Body of pancreas (tissue), 4 donors: ENCODE measurements at regions of chr12 and their contacts with region 1.

Region 1: DNA sequence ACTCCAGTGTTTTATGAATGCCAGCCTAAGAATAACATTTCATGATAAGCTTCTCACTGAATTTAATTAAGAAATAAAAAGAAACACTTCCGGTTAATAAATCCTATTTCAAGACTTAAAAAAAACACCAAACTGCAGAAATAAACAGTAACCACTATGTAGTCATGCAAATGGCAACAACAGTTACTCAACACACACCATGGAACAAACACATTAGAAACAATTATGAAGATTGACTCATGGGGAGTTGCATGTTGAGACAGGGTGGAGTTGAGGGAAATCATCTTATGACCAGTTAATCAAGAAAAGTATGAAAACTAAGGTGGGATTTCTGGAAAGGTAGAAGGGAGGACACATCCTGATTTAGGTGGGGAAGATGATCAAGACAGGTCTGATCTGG is 52.7 kb downstream of the PLBD1 start:
- DNase-seq: no peak
- ATAC-seq: no peak
- H3K4me3 ChIP-seq: no peak overlapping the region
- H3K27ac ChIP-seq: peak overlapping the region in 2 of 4 donors; percentile 2 to 53
- H3K4me1 ChIP-seq: peaks cover 14% of the 10 kb centered on the region
- H3K27me3 ChIP-seq: no peaks in the 10 kb centered on the region
- CTCF ChIP-seq: no peak
- POLR2A ChIP-seq: no peak

Region 2: DNA sequence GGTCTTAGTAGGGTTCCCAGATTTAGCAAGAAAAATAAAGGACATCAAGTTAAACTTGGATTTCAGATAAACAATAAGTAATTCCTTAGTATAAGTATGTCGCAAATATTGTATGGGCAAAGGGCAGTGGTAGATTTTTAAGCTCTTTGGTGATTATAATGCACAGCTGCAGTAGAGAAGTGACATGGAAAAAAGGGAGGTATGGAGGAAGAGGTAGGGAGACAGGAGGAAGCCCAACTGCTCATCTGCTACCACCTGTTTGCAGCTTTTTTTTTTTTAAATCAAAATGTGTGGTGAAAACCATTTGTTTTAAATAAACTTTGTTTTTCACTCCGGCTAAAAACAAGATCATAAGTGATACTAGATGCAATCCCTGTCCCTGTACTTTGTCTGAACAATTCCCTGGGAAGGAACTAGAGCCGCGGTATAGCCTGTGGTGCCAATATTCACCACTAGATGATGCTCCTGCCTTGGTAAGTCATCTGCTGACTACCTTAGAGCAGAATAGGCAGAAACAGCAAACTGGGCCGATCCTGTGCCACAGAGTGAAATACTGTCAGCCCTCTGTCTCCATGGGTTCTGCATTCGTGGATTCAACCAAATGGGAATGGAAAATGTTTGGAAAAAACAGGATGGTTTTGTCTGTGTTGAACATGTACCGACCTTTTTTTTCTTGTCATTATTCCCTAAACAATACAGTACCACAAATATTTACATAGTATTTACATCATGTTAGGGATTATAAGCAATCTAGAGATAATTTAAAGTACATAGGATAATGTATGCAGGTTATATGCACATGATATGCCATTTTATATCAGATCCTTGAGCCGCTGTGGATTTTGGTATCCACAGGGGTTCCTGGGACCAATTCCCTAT is 115.1 kb after region 1 on chr12:
- intact Hi-C with region 1: loop called (anchors 5 kb)
- DNase-seq: peak; percentile 78 to 87 (median 84)
- ATAC-seq: peak; percentile 98
- H3K4me3 ChIP-seq: no peak overlapping the region
- H3K27ac ChIP-seq: no peak overlapping the region
- H3K4me1 ChIP-seq: peaks cover 30% of the 10 kb centered on the region
- H3K27me3 ChIP-seq: no peaks in the 10 kb centered on the region
- CTCF ChIP-seq: peak; percentile 89 to 98 (median 96)
- POLR2A ChIP-seq: no peak